Heart left ventricle (tissue), 16 donors: ENCODE measurements at regions of chr15 and their contacts with region 1.

Region 1: GRCh38 chr15:39782441-39783138 is at the start of gene FSIP1:
- DNase-seq: peak; percentile 96 to 98 (median 97)
- ATAC-seq: peak; percentile 98 to 100 (median 100)
- H3K4me3 ChIP-seq: peak within 1 kb of the TSS; percentile 61 to 88 (median 72)
- H3K27ac ChIP-seq: peak within 1 kb of the TSS in 11 of 12 donors; percentile 62 to 86 (median 73)
- H3K4me1 ChIP-seq: peaks cover 0 to 35% (median 17%) of the 10 kb centered on the region in 12 donors
- H3K27me3 ChIP-seq: no peaks in the 10 kb centered on the region
- CTCF ChIP-seq: no peak
- POLR2A ChIP-seq: no peak
- total RNA-seq, gene FSIP1: 0.28 to 3.7 (median 1.5) TPM in 8 of 9 donors, not detected in the other

Region 2: GRCh38 chr15:39344662-39345141 is 437.9 kb before region 1 on chr15:
- intact Hi-C with region 1: no loop called
- DNase-seq: no peak
- ATAC-seq: no peak
- H3K4me3 ChIP-seq: no peak overlapping the region
- H3K27ac ChIP-seq: no peak overlapping the region
- H3K4me1 ChIP-seq: no peaks in the 10 kb centered on the region
- H3K27me3 ChIP-seq: no peaks in the 10 kb centered on the region
- CTCF ChIP-seq: no peak
- POLR2A ChIP-seq: no peak

Region 3: DNA sequence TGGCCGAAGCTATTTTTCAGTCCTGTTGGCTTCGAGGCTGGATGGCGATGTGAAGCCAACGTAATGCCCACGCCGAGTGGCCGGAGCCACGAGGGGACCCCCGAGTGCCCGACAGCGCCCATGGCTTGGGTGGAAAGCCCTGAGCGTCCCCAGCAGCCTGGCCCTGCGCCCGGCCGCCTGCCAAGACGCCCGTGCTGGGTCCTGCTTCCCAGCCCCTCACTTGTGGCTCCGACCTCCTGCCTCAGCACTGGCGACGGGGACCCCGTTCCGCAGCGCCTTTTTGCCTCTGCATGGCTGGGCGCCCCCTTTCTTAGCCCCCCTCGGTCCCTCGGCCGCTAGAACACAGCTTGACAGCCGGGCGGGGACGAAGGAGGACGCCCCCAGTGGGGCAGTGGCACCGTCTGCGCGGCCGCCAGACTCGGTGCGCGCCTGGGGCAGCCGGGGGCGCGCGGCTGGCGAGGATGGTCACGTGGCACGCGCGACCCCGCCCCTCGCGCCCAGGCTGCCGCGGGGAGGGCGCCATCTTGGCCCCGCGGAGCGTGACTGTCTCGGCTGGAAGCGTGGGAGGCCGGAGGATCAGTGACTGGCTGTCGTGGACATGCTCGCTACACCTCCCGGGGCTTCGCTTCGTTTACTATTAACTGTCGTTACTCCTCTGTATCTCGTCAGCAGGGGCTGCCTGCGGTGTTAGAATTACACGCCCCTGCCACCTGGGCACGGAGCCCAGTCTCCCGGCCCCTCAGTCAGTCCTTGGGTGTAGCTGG is 138.1 kb after region 1 on chr15:
- intact Hi-C with region 1: loop called in 1 of 10 experiments (anchors 5 kb)
- DNase-seq: peak; percentile 82 to 88 (median 83)
- ATAC-seq: peak; percentile 82 to 97 (median 96)
- H3K4me3 ChIP-seq: peak overlapping the region; percentile 47 to 84 (median 64)
- H3K27ac ChIP-seq: peak overlapping the region; percentile 27 to 80 (median 70)
- H3K4me1 ChIP-seq: peaks cover 0 to 25% (median 13%) of the 10 kb centered on the region in 12 donors
- H3K27me3 ChIP-seq: peaks cover 7 to 41% (median 11%) of the 10 kb centered on the region in 9 donors
- CTCF ChIP-seq: peak in 5 of 12 donors; percentile 7 to 23 (median 22)
- POLR2A ChIP-seq: peak in 1 of 2 donors; percentile 49

Region 4: DNA sequence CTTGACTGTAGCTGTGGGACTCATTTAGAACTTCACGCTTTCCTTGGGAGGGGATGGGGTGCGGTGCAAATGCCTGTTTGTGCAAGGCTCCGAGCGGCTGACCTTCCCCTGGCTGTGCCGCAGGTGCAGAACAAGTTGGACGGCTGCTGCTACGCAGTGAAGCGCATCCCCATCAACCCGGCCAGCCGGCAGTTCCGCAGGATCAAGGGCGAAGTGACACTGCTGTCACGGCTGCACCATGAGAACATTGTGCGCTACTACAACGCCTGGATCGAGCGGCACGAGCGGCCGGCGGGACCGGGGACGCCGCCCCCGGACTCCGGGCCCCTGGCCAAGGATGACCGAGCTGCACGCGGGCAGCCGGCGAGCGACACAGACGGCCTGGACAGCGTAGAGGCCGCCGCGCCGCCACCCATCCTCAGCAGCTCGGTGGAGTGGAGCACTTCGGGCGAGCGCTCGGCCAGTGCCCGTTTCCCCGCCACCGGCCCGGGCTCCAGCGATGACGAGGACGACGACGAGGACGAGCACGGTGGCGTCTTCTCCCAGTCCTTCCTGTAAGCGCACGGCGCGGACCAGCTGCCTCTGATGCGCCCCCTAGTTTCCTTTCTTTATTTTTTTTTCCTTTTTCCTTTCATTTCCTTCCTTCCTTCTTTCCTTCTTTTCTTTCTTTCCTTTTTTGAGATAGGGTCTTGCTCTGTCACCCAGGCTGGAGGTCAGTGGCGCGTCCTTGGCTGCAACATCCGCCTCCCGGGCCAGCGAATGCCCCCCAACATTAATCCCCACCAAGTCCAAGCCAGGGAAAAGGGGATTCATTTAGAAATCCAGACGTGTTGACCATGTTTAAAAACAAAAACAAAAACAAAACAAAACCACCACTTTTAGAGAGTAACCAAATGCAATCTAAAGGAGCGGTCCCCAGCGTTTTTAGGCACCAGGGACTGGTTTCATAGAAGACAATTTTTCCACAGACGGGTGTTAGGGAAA is 194.0 kb after region 1 on chr15:
- intact Hi-C with region 1: loop called in 9 of 10 experiments (anchors 2 to 10 kb)
- DNase-seq: peak; percentile 63 to 82 (median 74)
- ATAC-seq: peak; percentile 76 to 94 (median 92)
- H3K4me3 ChIP-seq: peak overlapping the region; percentile 12 to 78 (median 58)
- H3K27ac ChIP-seq: peak overlapping the region in 10 of 12 donors; percentile 44 to 88 (median 76)
- H3K4me1 ChIP-seq: peaks cover 0 to 14% (median 5%) of the 10 kb centered on the region in 12 donors
- H3K27me3 ChIP-seq: no peaks in the 10 kb centered on the region
- CTCF ChIP-seq: peak in 10 of 12 donors; percentile 10 to 73 (median 58)
- POLR2A ChIP-seq: no peak

Region 5: DNA sequence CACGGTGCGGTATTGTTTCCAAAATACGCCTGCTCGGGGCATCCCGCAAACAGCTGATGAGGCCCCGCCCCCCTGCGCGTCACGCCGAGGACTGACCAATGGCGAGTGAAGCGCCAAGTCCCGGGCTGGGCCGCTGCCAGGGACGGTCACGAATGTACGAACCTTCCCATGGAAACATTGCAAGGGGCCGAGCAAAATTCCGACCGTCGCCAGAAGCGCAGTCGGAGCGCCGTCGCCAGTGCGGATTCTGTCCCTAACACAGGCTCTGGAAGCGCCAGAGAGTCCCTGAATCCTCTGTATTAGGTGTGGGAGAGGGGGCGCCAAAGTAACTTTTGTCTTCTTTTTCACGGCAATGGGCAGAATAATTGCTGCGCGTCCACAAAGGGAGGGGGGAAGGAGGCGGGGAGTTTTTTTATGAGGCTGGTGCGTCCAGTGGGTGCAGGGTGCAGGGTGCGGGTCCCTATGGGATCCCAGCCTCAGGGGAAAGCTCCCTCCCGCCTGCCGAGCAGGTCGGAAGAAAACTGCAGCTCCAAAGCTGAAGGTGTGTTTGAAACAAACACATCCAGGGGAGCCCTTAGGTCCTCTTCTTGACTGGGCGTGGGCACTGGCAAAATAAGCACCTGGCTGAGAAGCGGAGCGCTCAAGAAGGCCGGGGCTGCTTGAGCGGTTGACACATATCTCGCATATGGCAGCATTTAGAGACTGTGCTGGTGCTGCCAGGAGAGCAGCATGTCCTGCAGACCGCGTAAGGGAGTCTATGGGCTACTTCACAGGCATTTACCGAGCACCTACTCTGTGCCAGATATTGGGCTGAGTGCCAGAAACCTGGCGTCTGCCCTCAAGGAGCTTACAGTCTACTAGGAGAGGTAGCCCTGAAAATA is 326.5 kb after region 1 on chr15 and contains the start of gene BMF:
- intact Hi-C with region 1: loop called in 3 of 10 experiments (anchors 5 to 10 kb)
- DNase-seq: peak; percentile 100
- ATAC-seq: peak; percentile 87 to 93 (median 90)
- H3K4me3 ChIP-seq: peak within 1 kb of the TSS; percentile 60 to 98 (median 80)
- H3K27ac ChIP-seq: peak within 1 kb of the TSS; percentile 26 to 90 (median 77)
- H3K4me1 ChIP-seq: peaks cover 0 to 43% (median 32%) of the 10 kb centered on the region in 12 donors
- H3K27me3 ChIP-seq: peaks cover 0 to 4% (median 0%) of the 10 kb centered on the region in 9 donors
- CTCF ChIP-seq: peak in 7 of 12 donors; percentile 11 to 54 (median 32)
- POLR2A ChIP-seq: peak in 1 of 2 donors; percentile 20
- total RNA-seq, gene BMF: 1.2 to 12.9 (median 3.5) TPM